HepG2 (cell line): ENCODE measurements at regions of chr16 and their contacts with region 1.

Region 1: GRCh38 chr16:71214746-71215381 is 15.7 kb downstream of the HYDIN start:
- DNase-seq: peak; percentile 17
- ATAC-seq: no peak; the same call in 2 of the 3 replicates
- H3K4me3 ChIP-seq: no peak overlapping the region
- H3K27ac ChIP-seq: no peak overlapping the region
- H3K4me1 ChIP-seq: no peaks in the 10 kb centered on the region
- H3K27me3 ChIP-seq: no peaks in the 10 kb centered on the region; a peak in 1 of 5 replicates
- CTCF ChIP-seq: peak; percentile 64
- EP300 ChIP-seq: no peak
- POLR2A ChIP-seq: no peak
- RAD21 ChIP-seq: 0 out of 2 replicates have a peak, but pooled peaks have one; percentile 32

Region 2: GRCh38 chr16:71311553-71312158 is 96.8 kb after region 1 on chr16:
- CTCF ChIA-PET with region 1: interaction called, 24 read pairs
- POLR2A ChIA-PET with region 1: no interaction called
- in situ Hi-C with region 1: no loop called
- intact Hi-C with region 1: no loop called
- DNase-seq: peak; percentile 54
- ATAC-seq: peak; percentile 61; the same call in 2 of the 3 replicates
- H3K4me3 ChIP-seq: no peak overlapping the region
- H3K27ac ChIP-seq: no peak overlapping the region
- H3K4me1 ChIP-seq: no peaks in the 10 kb centered on the region
- H3K27me3 ChIP-seq: peaks cover 0 to 2% of the 10 kb centered on the region in 2 experiments; a peak in 1 of 5 replicates
- CTCF ChIP-seq: peak; percentile 91
- EP300 ChIP-seq: no peak
- POLR2A ChIP-seq: no peak
- RAD21 ChIP-seq: peak; percentile 89

Region 3: GRCh38 chr16:71358464-71358998 is 143.7 kb after region 1 on chr16 and contains the start of gene CALB2:
- CTCF ChIA-PET with region 1: interaction called, 4 read pairs
- POLR2A ChIA-PET with region 1: no interaction called
- in situ Hi-C with region 1: no loop called
- intact Hi-C with region 1: loop called (anchors 5 kb)
- DNase-seq: peak; percentile 43
- ATAC-seq: peak; percentile 94
- H3K4me3 ChIP-seq: peak within 1 kb of the TSS in 1 of 3 experiments; percentile 45; a peak in 2 of 6 replicates
- H3K27ac ChIP-seq: no peak within 1 kb of the TSS
- H3K4me1 ChIP-seq: peaks cover 9% of the 10 kb centered on the region
- H3K27me3 ChIP-seq: peaks cover 2 to 63% of the 10 kb centered on the region in 2 experiments; a peak in 4 of 5 replicates
- CTCF ChIP-seq: peak; percentile 89
- EP300 ChIP-seq: no peak
- POLR2A ChIP-seq: no peak
- RAD21 ChIP-seq: peak; percentile 98
- total RNA-seq, gene CALB2: 0.22 and 0.40 TPM in 2 replicates